CD8-positive, alpha-beta memory T cell (primary cell): ENCODE measurements at regions of chr2 and their contacts with region 1.

Region 1: DNA sequence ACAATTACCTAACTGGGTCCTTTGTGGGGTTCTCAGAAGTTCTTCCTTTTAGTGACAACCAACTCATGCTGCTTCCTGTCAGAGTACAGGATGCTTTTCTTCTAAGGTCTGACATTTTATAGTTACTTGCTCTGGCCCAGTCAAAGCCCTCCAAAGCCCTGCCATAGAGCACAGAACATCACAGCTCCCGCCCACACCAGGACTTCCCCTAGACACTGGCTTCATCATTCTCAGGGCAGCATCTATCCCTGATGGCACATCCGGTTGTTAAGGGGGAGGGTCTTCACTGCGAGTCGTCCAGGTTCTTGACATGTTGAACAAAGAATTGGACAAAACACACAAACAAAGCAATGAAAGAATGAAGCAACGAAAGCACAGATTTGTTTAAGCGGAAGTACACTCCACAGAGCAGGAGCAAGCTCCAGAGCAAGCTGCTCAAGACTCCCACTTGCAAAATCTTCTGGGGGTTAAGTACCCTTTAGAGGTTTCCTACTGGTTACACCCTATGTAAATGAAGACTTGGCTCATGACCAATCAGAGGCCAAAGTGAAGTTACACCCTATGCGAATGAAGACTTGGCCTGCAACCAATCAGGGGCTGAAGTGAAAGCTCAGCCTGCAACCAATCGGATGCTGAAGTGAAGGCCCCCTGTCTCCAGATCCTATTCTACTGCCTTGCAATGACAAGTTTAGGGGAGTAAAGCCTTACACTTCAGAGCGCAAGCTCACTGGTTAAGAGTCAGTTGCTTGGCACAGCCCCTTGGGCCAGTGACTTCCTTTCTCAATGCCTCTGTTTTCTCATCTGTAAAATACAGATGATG is 79.0 kb downstream of the HDAC4 start:
- DNase-seq: peak in 3 of 5 donors; percentile 50 to 71 (median 52)
- H3K4me3 ChIP-seq: peak overlapping the region; percentile 1
- H3K4me3 Mint-ChIP-seq: peak overlapping the region in 6 of 7 donors; percentile 38 to 73 (median 62)
- H3K27ac ChIP-seq: peak overlapping the region; percentile 5
- H3K27ac Mint-ChIP-seq: peak overlapping the region; percentile 88 to 97 (median 94)
- H3K4me1 ChIP-seq: peaks cover 41% of the 10 kb centered on the region
- H3K4me1 Mint-ChIP-seq: peaks cover 56 to 72% (median 71%) of the 10 kb centered on the region in 3 donors
- H3K27me3 ChIP-seq: no peaks in the 10 kb centered on the region
- H3K27me3 Mint-ChIP-seq: peaks cover 0 to 3% of the 10 kb centered on the region in 2 donors

Region 2: DNA sequence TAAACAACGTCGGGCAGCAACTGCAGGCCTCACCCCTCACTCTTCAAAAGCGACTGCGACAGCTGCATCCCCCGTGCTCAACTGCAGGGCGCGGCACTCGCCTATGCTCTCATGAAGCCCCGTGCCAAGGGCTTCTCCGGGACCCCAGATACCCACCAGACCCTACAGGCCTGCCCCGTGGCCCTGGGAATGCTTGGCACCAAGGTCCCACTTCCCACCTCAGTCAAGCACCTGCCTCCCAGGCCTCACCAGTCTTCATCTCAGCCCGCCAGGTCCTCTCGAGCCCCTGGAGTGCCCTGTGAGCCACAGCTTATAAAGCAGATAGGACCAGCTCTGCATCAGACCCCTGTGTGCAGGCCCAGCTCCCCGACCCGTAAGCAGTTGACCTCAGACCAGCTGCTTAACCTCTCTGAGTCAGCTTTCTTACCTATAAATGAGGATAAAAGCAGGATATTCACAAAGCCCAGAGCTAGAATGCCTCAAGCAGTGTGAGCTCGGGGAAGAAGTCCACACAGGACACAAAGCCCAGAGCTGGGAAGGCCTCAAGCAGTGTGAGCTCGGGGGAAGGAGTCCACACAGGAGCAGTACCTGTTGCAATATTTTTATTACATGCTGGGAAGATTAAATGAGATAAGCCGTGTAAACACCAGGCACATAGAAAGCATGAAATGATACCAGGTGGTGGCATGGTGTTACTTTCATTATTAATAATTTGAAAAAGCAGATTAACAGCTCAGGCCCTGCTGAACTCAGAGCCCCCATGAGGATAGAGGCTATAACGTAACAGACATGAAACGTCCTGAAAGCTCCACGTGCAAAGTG is 17.9 kb before region 1 on chr2:
- CTCF ChIA-PET with region 1: interaction called, 4 read pairs
- POLR2A ChIA-PET with region 1: interaction called, 10 read pairs
- DNase-seq: no peak
- H3K4me3 ChIP-seq: no peak overlapping the region
- H3K4me3 Mint-ChIP-seq: peak overlapping the region in 3 of 7 donors; percentile 31 to 63 (median 56)
- H3K27ac ChIP-seq: no peak overlapping the region
- H3K27ac Mint-ChIP-seq: peak overlapping the region in 6 of 8 donors; percentile 5 to 81 (median 68)
- H3K4me1 ChIP-seq: peaks cover 10% of the 10 kb centered on the region
- H3K4me1 Mint-ChIP-seq: peaks cover 24 to 43% (median 25%) of the 10 kb centered on the region in 3 donors
- H3K27me3 ChIP-seq: no peaks in the 10 kb centered on the region
- H3K27me3 Mint-ChIP-seq: no peaks in the 10 kb centered on the region